HepG2 (cell line): ENCODE measurements at regions of chr1 and their contacts with region 1.

Region 1: DNA sequence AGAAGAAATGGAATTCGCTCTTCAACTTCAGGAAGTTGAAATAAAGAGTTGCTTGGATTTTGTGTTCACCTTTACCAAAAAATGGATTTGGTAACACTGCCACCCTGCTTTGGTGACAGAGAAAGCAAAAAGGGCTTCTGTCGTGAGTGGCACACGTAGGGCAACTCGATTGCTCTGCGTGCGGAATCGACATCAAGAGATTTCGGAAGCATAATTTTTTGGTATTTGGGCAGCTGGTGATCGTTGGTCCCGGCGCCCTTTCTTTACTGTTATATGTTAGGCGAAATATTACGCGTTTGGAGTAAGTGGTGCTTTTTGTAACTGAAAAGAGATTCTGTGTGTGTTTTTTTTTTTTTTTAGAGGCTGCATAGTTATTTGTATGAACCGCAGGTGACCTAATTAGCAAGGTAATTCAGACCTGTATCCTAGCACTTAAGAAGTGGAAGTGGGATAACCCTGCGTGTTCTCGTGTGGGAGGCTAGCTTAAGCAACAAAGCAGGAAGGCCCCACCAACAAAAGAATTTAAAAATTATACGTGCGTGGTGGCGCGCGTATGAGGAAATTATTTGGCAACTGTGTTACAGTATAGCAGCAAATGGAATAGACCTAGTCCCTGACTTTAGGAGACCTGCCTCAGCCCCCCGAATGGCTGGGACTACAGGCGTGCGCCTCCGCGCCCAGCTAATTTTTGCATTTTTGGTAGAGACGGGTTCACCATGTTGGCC is at the start of gene RNU11:
- DNase-seq: peak; percentile 95
- ATAC-seq: peak; percentile 81
- H3K4me3 ChIP-seq: peak within 1 kb of the TSS; percentile 56 to 81 (median 68)
- H3K27ac ChIP-seq: peak within 1 kb of the TSS; percentile 100
- H3K4me1 ChIP-seq: peaks cover 56% of the 10 kb centered on the region
- H3K27me3 ChIP-seq: no peaks in the 10 kb centered on the region
- CTCF ChIP-seq: no peak; the same call in none of the 2 replicates
- EP300 ChIP-seq: peak in 1 of 2 experiments; percentile 77; a peak in 3 of 4 replicates
- POLR2A ChIP-seq: peak; percentile 99 to 100
- RAD21 ChIP-seq: peak; percentile 43
- total RNA-seq, gene RNU11: not detected in 2 replicates

Region 2: GRCh38 chr1:28505406-28506187 is 143.0 kb before region 1 on chr1 and contains the start of gene RCC1:
- CTCF ChIA-PET with region 1: no interaction called
- POLR2A ChIA-PET with region 1: interaction called, 15 read pairs
- in situ Hi-C with region 1: no loop called
- intact Hi-C with region 1: no loop called
- DNase-seq: peak; percentile 99
- ATAC-seq: peak; percentile 83
- H3K4me3 ChIP-seq: peak within 1 kb of the TSS; percentile 95 to 97 (median 96)
- H3K27ac ChIP-seq: peak within 1 kb of the TSS; percentile 86
- H3K4me1 ChIP-seq: peaks cover 36% of the 10 kb centered on the region
- H3K27me3 ChIP-seq: no peaks in the 10 kb centered on the region; a peak in 1 of 5 replicates
- CTCF ChIP-seq: no peak
- EP300 ChIP-seq: no peak
- POLR2A ChIP-seq: peak; percentile 98 to 100
- RAD21 ChIP-seq: no peak
- total RNA-seq, gene RCC1: 80.8 and 102 TPM in 2 replicates

Region 3: GRCh38 chr1:28518000-28518744 is 130.5 kb before region 1 on chr1:
- CTCF ChIA-PET with region 1: no interaction called
- POLR2A ChIA-PET with region 1: interaction called, 3 read pairs
- in situ Hi-C with region 1: no loop called
- intact Hi-C with region 1: loop called (anchors 5 kb)
- DNase-seq: peak; percentile 76
- ATAC-seq: peak; percentile 45
- H3K4me3 ChIP-seq: peak overlapping the region; percentile 66 to 85 (median 75)
- H3K27ac ChIP-seq: peak overlapping the region; percentile 91
- H3K4me1 ChIP-seq: peaks cover 31% of the 10 kb centered on the region
- H3K27me3 ChIP-seq: no peaks in the 10 kb centered on the region
- CTCF ChIP-seq: peak; percentile 92
- EP300 ChIP-seq: 0 out of 4 replicates have a peak, but pooled peaks of 1 of the 2 experiments have one; percentile 6
- POLR2A ChIP-seq: peak; percentile 47 to 86; a peak in 3 of 4 replicates
- RAD21 ChIP-seq: peak; percentile 87

Region 4: GRCh38 chr1:28668191-28668955 is 19.7 kb after region 1 on chr1 and contains the start of gene GMEB1:
- CTCF ChIA-PET with region 1: no interaction called
- POLR2A ChIA-PET with region 1: interaction called, 115 read pairs
- in situ Hi-C with region 1: no loop called
- intact Hi-C with region 1: no loop called
- DNase-seq: peak; percentile 73
- ATAC-seq: peak; percentile 80
- H3K4me3 ChIP-seq: peak within 1 kb of the TSS; percentile 81 to 97 (median 92)
- H3K27ac ChIP-seq: peak within 1 kb of the TSS; percentile 97
- H3K4me1 ChIP-seq: peaks cover 39% of the 10 kb centered on the region
- H3K27me3 ChIP-seq: peaks cover 0 to 4% of the 10 kb centered on the region in 2 experiments; a peak in 2 of 5 replicates
- CTCF ChIP-seq: no peak
- EP300 ChIP-seq: no peak
- POLR2A ChIP-seq: peak in 1 of 2 experiments; percentile 39; a peak in 2 of 4 replicates
- RAD21 ChIP-seq: no peak
- total RNA-seq, gene GMEB1: 6.0 and 7.4 TPM in 2 replicates

Region 5: GRCh38 chr1:28736450-28737306 is 88.0 kb after region 1 on chr1 and contains the start of gene YTHDF2:
- CTCF ChIA-PET with region 1: no interaction called
- POLR2A ChIA-PET with region 1: interaction called, 89 read pairs
- in situ Hi-C with region 1: no loop called
- intact Hi-C with region 1: loop called (anchors 1 kb)
- DNase-seq: peak; percentile 96
- ATAC-seq: peak; percentile 88
- H3K4me3 ChIP-seq: peak within 1 kb of the TSS; percentile 75 to 95 (median 89)
- H3K27ac ChIP-seq: peak within 1 kb of the TSS; percentile 97
- H3K4me1 ChIP-seq: peaks cover 66% of the 10 kb centered on the region
- H3K27me3 ChIP-seq: no peaks in the 10 kb centered on the region; a peak in 1 of 5 replicates
- CTCF ChIP-seq: peak; percentile 95
- EP300 ChIP-seq: peak; percentile 31 to 36; a peak in 2 of 4 replicates
- POLR2A ChIP-seq: peak; percentile 57 to 78
- RAD21 ChIP-seq: peak; percentile 69
- total RNA-seq, gene YTHDF2: 59.6 and 84.7 TPM in 2 replicates